ENCODE measurements at regions of chr16 and their contacts with region 1.

Region 1: GRCh38 chr16:66662445-66663194 is 33.9 kb downstream of the CMTM4 start:
- DNase-seq: peak; percentile 44
- H3K4me3 ChIP-seq: no peak overlapping the region
- H3K27ac ChIP-seq: no peak overlapping the region
- H3K4me1 ChIP-seq: no peaks in the 10 kb centered on the region
- CTCF ChIP-seq: peak; percentile 80

Region 2: DNA sequence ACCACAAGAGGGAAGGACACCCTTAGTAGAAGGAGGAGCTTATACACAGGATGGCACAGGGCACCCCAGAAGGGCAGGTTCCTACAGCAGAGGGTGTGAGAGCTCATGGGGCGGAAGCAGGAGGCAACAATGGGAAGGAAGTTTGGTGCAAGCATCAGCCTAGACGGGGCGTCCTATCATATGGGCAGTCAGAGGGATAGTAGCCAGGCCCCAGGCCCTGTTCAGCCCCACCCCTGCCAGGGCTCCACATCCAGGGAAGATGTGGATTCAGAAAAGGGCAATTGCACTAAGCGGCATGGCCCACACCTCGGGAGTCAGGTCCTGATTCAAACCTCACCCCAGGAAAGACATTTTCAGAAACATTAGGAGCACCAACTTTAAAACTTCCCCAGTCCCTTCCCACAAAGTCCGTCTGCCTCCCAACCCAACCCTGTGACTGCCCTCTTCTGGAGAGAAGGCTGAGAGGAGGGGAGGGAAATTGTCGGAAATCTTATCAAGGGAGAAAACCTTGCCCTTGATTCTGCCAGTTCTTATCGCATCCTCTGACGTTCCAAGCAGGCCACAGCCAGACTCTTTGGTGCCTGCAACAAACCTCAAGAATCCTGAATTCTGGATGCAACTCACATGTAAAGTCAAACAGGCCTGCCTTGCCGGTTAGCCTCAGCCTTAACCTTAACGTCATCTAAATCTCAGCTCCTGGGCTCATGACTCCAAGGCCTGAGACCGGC is 494.9 kb before region 1 on chr16:
- CTCF ChIA-PET with region 1: no interaction called
- POLR2A ChIA-PET with region 1: no interaction called
- intact Hi-C with region 1: no loop called
- DNase-seq: no peak
- H3K4me3 ChIP-seq: no peak overlapping the region
- H3K27ac ChIP-seq: no peak overlapping the region
- H3K4me1 ChIP-seq: no peaks in the 10 kb centered on the region
- CTCF ChIP-seq: no peak

Region 3: GRCh38 chr16:66650707-66651473 is 11.7 kb before region 1 on chr16:
- CTCF ChIA-PET with region 1: interaction called, 5 read pairs
- POLR2A ChIA-PET with region 1: interaction called, 10 read pairs
- intact Hi-C with region 1: no loop called
- DNase-seq: peak; percentile 71
- H3K4me3 ChIP-seq: no peak overlapping the region
- H3K27ac ChIP-seq: no peak overlapping the region
- H3K4me1 ChIP-seq: no peaks in the 10 kb centered on the region
- CTCF ChIP-seq: peak; percentile 94

Measured in OCI-LY7 (cell line).